Activated T-helper 1 cell treated with anti-CD3 and anti-CD28 coated beads, Interleukin-12 subunit alpha, Interleukin-12 subunit beta, Interleukin-2, Interleukin-4 antibody, amounts not matched to agents 30 ng/mL and 10 ng/mL and 1 ng/mL, durations not matched to agents 14 hours and 24 hours and 36 hours (primary cell): ENCODE measurements at regions of chr14 and their contacts with region 1.

Region 1: GRCh38 chr14:70714055-70714621 is 72.4 kb downstream of the TTC9 start:
- DNase-seq: peak; percentile 9
- H3K4me3 Mint-ChIP-seq: no peak overlapping the region
- H3K27ac Mint-ChIP-seq: no peak overlapping the region
- H3K4me1 Mint-ChIP-seq: peaks cover 6% of the 10 kb centered on the region
- H3K27me3 Mint-ChIP-seq: peaks cover 15% of the 10 kb centered on the region

Region 2: GRCh38 chr14:70622111-70622712 is 91.9 kb before region 1 on chr14:
- intact Hi-C with region 1: loop called (anchors 1 kb)
- DNase-seq: peak; percentile 51
- H3K4me3 Mint-ChIP-seq: no peak overlapping the region
- H3K27ac Mint-ChIP-seq: no peak overlapping the region
- H3K4me1 Mint-ChIP-seq: no peaks in the 10 kb centered on the region
- H3K27me3 Mint-ChIP-seq: peaks cover 7% of the 10 kb centered on the region

Region 3: GRCh38 chr14:70640938-70641547 is 73.1 kb before region 1 on chr14:
- intact Hi-C with region 1: loop called (anchors 1 kb)
- DNase-seq: peak; percentile 37
- H3K4me3 Mint-ChIP-seq: peak overlapping the region; percentile 97
- H3K27ac Mint-ChIP-seq: peak overlapping the region; percentile 88
- H3K4me1 Mint-ChIP-seq: peaks cover 45% of the 10 kb centered on the region
- H3K27me3 Mint-ChIP-seq: peaks cover 9% of the 10 kb centered on the region

Region 4: DNA sequence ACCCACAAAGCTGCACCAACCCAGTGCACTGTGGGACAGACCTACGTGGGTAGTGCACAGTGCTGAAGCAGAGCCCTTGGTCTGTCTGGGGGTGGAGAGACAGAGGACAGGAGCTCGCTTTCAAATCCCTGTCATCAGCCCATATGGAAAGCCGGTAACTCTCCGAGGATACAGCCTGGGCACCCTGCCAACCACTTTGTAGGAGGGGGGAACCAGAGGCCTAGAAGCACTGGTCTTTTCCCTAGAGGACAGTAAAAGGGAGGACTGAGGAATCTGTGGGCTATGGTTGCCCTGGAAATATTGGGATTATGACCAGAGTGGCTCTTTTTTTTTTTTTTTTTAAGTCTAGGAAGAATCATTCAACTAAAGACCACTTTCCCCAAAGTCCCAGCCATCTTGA is 20.9 kb after region 1 on chr14:
- intact Hi-C with region 1: no loop called
- DNase-seq: no peak
- H3K4me3 Mint-ChIP-seq: no peak overlapping the region
- H3K27ac Mint-ChIP-seq: no peak overlapping the region
- H3K4me1 Mint-ChIP-seq: no peaks in the 10 kb centered on the region
- H3K27me3 Mint-ChIP-seq: no peaks in the 10 kb centered on the region

Region 5: GRCh38 chr14:70816525-70816924 is 102.4 kb after region 1 on chr14:
- intact Hi-C with region 1: loop called (anchors 2 kb)
- DNase-seq: no peak
- H3K4me3 Mint-ChIP-seq: no peak overlapping the region
- H3K27ac Mint-ChIP-seq: no peak overlapping the region
- H3K4me1 Mint-ChIP-seq: peaks cover 18% of the 10 kb centered on the region
- H3K27me3 Mint-ChIP-seq: no peaks in the 10 kb centered on the region

Region 6: GRCh38 chr14:70972107-70972976 is 258.2 kb after region 1 on chr14:
- intact Hi-C with region 1: loop called (anchors 5 kb)
- DNase-seq: peak; percentile 69
- H3K4me3 Mint-ChIP-seq: no peak overlapping the region
- H3K27ac Mint-ChIP-seq: no peak overlapping the region
- H3K4me1 Mint-ChIP-seq: peaks cover 14% of the 10 kb centered on the region
- H3K27me3 Mint-ChIP-seq: no peaks in the 10 kb centered on the region

Region 7: DNA sequence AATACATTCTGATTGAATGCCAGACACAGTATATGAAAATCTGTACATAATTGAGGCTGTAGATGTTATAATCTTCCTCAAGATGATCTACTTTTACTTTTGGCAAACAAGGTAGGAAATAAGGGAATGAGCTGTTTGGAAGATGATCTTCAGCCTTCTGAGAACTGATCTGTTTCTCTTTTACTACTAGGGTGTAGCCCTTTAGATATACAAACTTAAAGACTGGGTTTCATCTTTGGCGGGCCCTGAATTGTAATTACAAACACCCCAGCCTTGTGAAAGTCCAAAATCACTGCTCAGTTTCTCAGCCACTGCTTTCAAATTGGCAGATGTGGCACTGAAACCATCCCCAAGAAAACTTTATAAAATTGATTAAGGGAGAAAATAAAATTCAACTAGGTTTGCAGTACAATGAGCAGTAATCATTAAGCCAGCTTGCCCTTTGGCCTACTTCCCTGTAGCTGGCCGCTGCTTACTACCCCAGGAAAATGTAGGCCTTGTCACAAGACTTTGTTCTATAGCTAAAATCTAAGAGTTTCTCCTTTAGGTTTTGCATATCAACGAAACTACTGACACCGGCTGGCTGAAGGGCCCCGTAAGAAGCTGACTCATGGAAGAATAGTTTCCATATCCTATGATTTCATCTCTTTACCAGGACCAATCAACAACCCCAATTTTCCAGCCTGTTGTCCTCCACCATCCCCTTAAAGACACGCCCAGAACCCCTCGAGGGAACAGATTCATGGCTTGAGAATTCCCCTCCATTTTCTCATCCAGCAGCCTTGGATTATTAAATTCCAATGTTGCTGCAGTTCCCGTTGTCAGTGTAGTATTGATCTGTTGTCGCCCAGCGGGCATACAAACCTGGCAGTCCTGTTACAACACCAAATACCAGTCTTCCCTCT is 404.0 kb after region 1 on chr14:
- intact Hi-C with region 1: no loop called
- DNase-seq: no peak
- H3K4me3 Mint-ChIP-seq: no peak overlapping the region
- H3K27ac Mint-ChIP-seq: peak overlapping the region; percentile 2
- H3K4me1 Mint-ChIP-seq: peaks cover 10% of the 10 kb centered on the region
- H3K27me3 Mint-ChIP-seq: no peaks in the 10 kb centered on the region